OCI-LY7 (cell line): ENCODE measurements at regions of chr19 and their contacts with region 1.

Region 1: DNA sequence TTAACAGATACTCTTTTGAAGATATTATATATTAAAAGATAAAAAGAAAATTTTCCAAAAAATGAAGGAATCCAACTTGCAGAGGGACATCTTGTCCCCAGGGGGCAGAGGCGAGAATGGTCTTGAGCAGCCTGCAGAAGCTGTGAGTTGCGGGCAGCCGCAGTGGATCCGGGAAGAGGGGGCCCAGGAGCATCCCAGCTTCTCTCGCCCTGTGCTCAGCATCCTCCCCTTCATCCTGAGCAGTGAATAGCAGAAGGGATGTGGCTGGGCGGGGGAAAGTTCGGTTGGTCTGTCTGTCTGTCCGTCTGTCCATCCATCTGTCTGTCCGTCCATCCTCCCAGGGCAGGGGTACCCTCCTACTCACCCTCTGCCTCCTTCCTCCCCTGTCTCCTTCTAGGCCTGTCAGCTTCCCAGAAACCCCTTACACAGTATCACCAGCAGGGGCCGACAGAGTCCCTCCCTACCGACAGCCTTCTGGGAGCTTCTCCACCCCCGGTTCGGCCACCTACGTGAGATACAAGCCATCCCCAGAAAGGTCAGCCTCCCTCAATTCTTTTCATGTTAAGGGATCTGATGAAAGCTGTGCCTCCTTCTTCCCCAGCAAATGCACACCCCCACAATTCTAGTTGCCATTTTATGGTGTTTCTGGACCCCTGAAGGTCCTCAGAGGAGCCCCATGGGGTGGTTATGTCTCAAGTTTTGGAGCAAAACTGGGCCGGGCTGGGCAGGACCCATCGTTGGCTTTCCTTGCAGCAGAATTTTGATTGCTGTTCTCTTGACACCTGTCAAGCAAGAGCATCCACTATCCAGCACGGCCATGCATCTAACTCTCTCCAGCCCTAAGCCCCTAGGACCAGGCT is 81.6 kb downstream of the DPF1 start:
- DNase-seq: peak; percentile 63
- H3K4me3 ChIP-seq: no peak overlapping the region
- H3K27ac ChIP-seq: no peak overlapping the region
- H3K4me1 ChIP-seq: no peaks in the 10 kb centered on the region
- CTCF ChIP-seq: peak; percentile 79

Region 2: GRCh38 chr19:38224014-38224862 is 81.8 kb after region 1 on chr19 and contains the start of gene DPF1:
- CTCF ChIA-PET with region 1: no interaction called
- POLR2A ChIA-PET with region 1: no interaction called
- intact Hi-C with region 1: loop called (anchors 5 kb)
- DNase-seq: peak; percentile 88
- H3K4me3 ChIP-seq: peak within 1 kb of the TSS; percentile 76
- H3K27ac ChIP-seq: no peak within 1 kb of the TSS
- H3K4me1 ChIP-seq: peaks cover 26% of the 10 kb centered on the region
- CTCF ChIP-seq: peak; percentile 76
- total RNA-seq, gene DPF1: 6.5 and 7.6 TPM in 2 replicates

Region 3: GRCh38 chr19:38361633-38362075 is 219.2 kb after region 1 on chr19:
- CTCF ChIA-PET with region 1: no interaction called
- POLR2A ChIA-PET with region 1: no interaction called
- intact Hi-C with region 1: no loop called
- DNase-seq: peak; percentile 82
- H3K4me3 ChIP-seq: peak overlapping the region; percentile 71
- H3K27ac ChIP-seq: no peak overlapping the region
- H3K4me1 ChIP-seq: peaks cover 11% of the 10 kb centered on the region
- CTCF ChIP-seq: 0 out of 2 replicates have a peak, but pooled peaks have one; percentile 14